Activated B cell treated with CpG ODN at 0.5 μM for 24 hours (primary cell): ENCODE measurements at regions of chrX and their contacts with region 1.

Region 1: DNA sequence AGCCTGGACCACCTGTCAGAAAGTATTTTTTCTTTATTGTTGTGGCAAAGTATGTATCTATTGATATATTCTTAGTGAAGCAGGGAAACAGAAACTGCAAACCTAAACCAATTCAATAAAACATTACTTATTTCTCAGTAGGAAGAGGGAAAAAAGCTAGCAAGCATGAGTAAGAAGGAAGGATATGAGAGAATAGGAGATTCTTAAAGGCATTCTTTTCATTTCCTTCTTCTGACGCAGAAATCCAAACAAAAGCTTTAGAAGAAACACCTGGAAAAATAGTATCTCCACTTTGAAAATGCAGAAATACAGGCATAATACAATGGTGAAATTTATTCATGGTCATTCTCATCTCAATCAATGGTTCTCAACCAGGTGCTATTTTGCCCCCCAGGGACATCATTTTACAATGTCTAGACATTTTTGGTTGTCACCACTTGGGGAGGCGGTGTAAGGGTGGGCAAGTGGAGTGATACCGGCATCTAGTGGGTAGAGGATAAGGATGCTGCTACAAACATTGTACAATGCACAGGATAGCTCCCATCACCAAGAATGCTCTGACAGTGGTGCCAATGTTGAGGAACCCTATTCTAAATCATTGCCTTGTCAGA is 21.7 kb upstream of the ATXN3L start:
- DNase-seq: no peak
- ATAC-seq: no peak
- H3K4me3 Mint-ChIP-seq: no peak overlapping the region
- H3K27ac Mint-ChIP-seq: no peak overlapping the region
- H3K4me1 Mint-ChIP-seq: peaks cover 20% of the 10 kb centered on the region
- H3K27me3 Mint-ChIP-seq: no peaks in the 10 kb centered on the region
- CTCF ChIP-seq: no peak

Region 2: GRCh38 chrX:13263560-13264251 is 77.9 kb before region 1 on chrX:
- CTCF ChIA-PET with region 1: no interaction called
- POLR2A ChIA-PET with region 1: no interaction called
- intact Hi-C with region 1: loop called (anchors 2 kb)
- DNase-seq: no peak
- ATAC-seq: peak; percentile 92
- H3K4me3 Mint-ChIP-seq: peak overlapping the region; percentile 57
- H3K27ac Mint-ChIP-seq: no peak overlapping the region
- H3K4me1 Mint-ChIP-seq: peaks cover 18% of the 10 kb centered on the region
- H3K27me3 Mint-ChIP-seq: no peaks in the 10 kb centered on the region
- CTCF ChIP-seq: no peak

Region 3: GRCh38 chrX:13298836-13299235 is 42.8 kb before region 1 on chrX:
- CTCF ChIA-PET with region 1: no interaction called
- POLR2A ChIA-PET with region 1: no interaction called
- intact Hi-C with region 1: loop called (anchors 5 kb)
- DNase-seq: no peak
- ATAC-seq: no peak
- H3K4me3 Mint-ChIP-seq: no peak overlapping the region
- H3K27ac Mint-ChIP-seq: no peak overlapping the region
- H3K4me1 Mint-ChIP-seq: peaks cover 15% of the 10 kb centered on the region
- H3K27me3 Mint-ChIP-seq: no peaks in the 10 kb centered on the region
- CTCF ChIP-seq: no peak